Activated CD4-positive, alpha-beta T cell treated with anti-CD3 and anti-CD28 coated beads, Interleukin-2, amount 10 ng/mL, durations not matched to agents 24 days and 14 days (primary cell): ENCODE measurements at regions of chr9 and their contacts with region 1.

Region 1: DNA sequence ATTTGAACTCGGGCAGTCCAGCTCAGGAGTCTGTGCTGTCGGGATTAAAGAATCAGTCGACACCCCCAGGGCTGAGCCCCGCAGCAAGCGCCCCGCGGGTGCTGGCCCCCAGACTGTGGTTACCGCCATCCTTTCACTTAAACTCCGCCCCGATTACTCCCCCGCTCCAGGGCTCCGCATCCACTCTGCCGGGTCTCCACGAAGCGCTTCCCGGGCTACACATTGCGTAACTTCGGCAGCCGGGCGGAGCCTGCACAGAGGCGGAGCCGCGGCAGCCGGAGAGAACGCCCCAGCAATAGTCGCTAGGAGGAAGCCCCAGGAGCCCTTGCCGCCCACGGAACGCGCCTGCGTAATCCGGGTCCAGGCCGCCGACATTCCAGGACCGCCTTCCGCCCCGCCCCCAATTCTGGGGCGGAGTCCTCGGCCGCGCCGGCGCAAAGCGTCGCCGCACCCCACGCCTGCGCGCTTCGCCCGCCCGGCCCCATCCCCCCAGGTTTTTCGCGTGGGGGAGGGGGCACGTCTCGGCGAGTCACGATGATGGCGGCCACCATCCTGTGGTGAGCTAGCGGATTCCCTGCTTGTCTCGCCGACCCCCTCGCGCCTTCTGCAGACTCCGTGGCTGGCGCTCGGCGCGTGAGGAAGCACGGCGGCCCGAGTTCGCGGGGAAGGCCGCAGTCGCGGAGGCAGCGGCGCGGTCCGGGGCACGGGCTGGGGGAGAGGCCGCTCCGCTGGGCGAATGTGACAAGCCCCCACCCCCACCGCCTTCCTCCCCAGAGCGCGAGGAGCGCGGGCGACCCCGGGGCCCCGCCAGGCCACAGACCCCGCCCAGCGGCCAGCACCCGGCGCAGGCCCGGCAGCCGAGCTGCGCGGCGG is at the start of gene RAD23B:
- DNase-seq: peak; percentile 99
- H3K4me3 Mint-ChIP-seq: peak within 1 kb of the TSS; percentile 98
- H3K27ac Mint-ChIP-seq: peak within 1 kb of the TSS; percentile 96
- H3K4me1 Mint-ChIP-seq: peaks cover 41% of the 10 kb centered on the region
- H3K27me3 Mint-ChIP-seq: no peaks in the 10 kb centered on the region
- total RNA-seq, gene RAD23B: 148 and 150 TPM in 2 replicates

Region 2: GRCh38 chr9:105694190-105694847 is 1588.7 kb before region 1 on chr9 and contains the start of gene TMEM38B:
- intact Hi-C with region 1: loop called (anchors 10 kb)
- DNase-seq: peak; percentile 95
- H3K4me3 Mint-ChIP-seq: peak within 1 kb of the TSS; percentile 82
- H3K27ac Mint-ChIP-seq: peak within 1 kb of the TSS; percentile 63
- H3K4me1 Mint-ChIP-seq: peaks cover 16% of the 10 kb centered on the region
- H3K27me3 Mint-ChIP-seq: peaks cover 26% of the 10 kb centered on the region
- total RNA-seq, gene TMEM38B: 10.9 and 12.0 TPM in 2 replicates

Region 3: DNA sequence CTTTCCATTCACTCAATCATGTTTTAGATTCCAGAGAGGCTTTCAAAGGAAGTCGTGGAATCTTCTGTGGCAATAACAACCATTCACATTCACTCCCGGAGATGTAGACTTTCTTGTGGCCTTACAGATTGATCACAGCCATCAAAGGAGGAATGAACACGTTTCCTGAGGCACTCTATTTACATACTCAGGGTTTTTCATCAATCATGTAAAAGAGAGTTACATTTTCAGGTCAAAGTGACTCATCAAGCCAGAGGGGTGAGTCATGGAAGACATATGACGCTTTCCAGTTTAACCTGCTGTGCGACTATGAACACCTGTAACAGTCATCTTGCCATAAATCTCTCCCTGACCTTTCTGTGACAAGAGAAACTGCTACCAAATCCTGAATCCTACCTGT is 39.2 kb before region 1 on chr9:
- intact Hi-C with region 1: loop called (anchors 1 kb)
- DNase-seq: peak; percentile 68
- H3K4me3 Mint-ChIP-seq: no peak overlapping the region
- H3K27ac Mint-ChIP-seq: peak overlapping the region; percentile 74
- H3K4me1 Mint-ChIP-seq: peaks cover 17% of the 10 kb centered on the region
- H3K27me3 Mint-ChIP-seq: no peaks in the 10 kb centered on the region

Region 4: DNA sequence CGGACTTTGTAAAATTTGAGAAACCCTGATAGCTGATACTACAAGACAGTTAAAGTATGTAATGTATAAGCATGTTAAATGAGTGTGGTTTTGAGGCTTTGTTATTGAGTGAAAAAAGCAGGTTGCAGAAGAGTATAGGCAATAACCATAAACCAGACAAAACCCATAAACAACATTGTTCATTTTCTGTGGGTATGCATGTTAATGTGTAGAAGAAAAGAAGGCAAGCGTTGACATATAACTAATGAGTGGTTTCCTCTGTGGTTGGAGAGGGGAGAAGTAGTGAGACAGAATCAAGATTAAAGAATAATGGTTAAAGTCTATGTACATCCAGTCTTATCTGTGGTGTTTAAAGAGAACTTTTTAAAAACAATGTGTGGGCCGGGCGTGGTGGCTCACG is 26.3 kb after region 1 on chr9:
- intact Hi-C with region 1: loop called (anchors 2 kb)
- DNase-seq: peak; percentile 64
- H3K4me3 Mint-ChIP-seq: peak overlapping the region; percentile 28
- H3K27ac Mint-ChIP-seq: peak overlapping the region; percentile 12
- H3K4me1 Mint-ChIP-seq: peaks cover 58% of the 10 kb centered on the region
- H3K27me3 Mint-ChIP-seq: no peaks in the 10 kb centered on the region

Region 5: DNA sequence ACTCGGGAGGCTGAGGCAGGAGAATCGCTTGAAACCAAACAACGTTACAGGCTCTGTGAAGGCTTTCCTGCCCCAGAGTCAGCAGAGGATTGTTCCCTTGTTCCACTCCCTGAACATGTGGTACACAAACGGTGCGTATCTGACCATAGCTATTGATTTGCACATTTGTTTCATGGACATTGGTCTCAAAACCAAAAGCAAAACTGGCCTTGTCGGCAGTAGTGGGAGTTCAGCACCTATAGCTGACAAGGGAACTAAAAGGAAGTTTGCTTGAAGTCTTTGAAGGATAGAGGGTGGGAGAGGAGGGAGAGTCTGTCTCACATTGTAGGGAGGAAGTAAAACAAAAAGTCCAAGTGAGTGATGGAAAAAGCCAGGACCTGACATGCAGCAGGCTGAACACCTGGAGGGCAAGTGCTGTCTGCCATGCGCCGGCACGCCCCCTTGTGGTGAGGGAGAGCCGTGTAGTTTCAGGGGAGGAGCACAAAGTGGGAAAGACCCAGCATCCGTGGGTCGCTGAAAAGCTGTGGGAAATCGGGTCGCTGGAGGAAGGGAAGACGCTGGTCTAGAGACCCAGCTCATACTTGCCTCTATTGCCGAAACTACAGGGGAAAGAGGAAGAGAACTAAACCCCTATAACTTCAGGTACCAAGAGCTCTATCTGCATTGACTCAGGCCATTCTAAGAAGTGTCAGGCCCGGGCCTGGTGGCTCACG is 58.1 kb after region 1 on chr9:
- intact Hi-C with region 1: loop called (anchors 2 kb)
- DNase-seq: peak; percentile 94
- H3K4me3 Mint-ChIP-seq: no peak overlapping the region
- H3K27ac Mint-ChIP-seq: peak overlapping the region; percentile 6
- H3K4me1 Mint-ChIP-seq: peaks cover 9% of the 10 kb centered on the region
- H3K27me3 Mint-ChIP-seq: no peaks in the 10 kb centered on the region

Region 6: DNA sequence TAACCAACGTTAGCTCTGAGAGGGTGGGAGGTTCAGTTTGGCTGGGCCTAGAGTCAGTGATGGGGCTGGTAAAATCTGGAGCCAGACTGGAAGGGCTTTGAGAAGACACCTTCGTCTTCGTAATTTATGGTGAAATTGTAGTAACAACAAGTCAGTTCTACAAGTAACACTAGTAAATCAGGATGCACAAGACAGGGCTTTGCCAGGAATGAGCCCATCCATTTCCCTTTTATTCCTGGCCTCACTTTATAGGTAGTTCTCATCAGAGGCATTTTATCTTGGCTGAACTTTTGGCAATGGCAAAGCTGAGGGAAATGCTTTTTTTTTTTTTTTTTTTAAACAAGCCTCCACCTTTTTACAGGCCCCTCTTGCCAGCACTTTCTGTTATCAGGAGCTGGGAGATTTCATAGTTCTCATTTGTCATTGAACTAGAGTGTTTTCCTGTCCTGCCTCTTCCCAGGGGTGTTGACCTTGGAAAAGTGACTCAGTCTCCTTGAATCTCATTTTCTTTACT is 317.1 kb after region 1 on chr9:
- intact Hi-C with region 1: no loop called
- DNase-seq: no peak
- H3K4me3 Mint-ChIP-seq: no peak overlapping the region
- H3K27ac Mint-ChIP-seq: no peak overlapping the region
- H3K4me1 Mint-ChIP-seq: no peaks in the 10 kb centered on the region
- H3K27me3 Mint-ChIP-seq: no peaks in the 10 kb centered on the region